Mammary epithelial cell (primary cell): ENCODE measurements at regions of chr7 and their contacts with region 1.

Region 1: GRCh38 chr7:142782922-142783900 is 12.4 kb downstream of the PRSS2 start:
- DNase-seq: peak; percentile 75
- H3K4me3 ChIP-seq: peak overlapping the region; percentile 38 to 49 (median 43)
- H3K27ac ChIP-seq: no peak overlapping the region
- H3K4me1 ChIP-seq: no peaks in the 10 kb centered on the region
- H3K27me3 ChIP-seq: no peaks in the 10 kb centered on the region
- CTCF ChIP-seq: peak; percentile 97

Region 2: DNA sequence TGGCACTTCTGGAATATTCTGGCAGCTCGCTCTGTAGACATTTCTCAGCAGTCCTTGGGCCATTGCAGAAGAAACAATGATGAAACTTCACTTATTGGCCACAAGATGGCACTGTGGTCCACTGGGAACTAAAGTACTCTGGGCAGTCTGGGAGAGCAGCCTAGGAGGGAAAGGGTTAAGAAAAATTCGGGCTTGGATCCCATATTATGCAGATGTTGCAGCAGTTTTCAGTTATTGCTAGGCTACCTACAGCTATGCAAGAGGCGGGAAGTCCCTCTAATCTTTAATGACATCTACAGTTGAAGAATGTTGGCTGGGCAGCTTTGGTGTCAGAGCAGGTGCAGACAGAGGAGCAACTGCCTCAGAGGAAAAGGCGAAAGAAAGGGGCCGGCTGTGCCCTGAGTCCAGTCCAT is 323.7 kb before region 1 on chr7:
- CTCF ChIA-PET with region 1: interaction called, 5 read pairs
- dilution Hi-C with region 1: no loop called
- in situ Hi-C with region 1: no loop called
- intact Hi-C with region 1: loop called (anchors 1 kb)
- DNase-seq: peak; percentile 67
- H3K4me3 ChIP-seq: no peak overlapping the region
- H3K27ac ChIP-seq: no peak overlapping the region
- H3K4me1 ChIP-seq: peaks cover 19% of the 10 kb centered on the region
- H3K27me3 ChIP-seq: no peaks in the 10 kb centered on the region
- CTCF ChIP-seq: peak; percentile 70 to 77

Region 3: GRCh38 chr7:142516038-142516501 is 267.1 kb before region 1 on chr7:
- CTCF ChIA-PET with region 1: interaction called, 3 read pairs
- dilution Hi-C with region 1: no loop called
- in situ Hi-C with region 1: no loop called
- intact Hi-C with region 1: loop called (anchors 1 kb)
- DNase-seq: peak; percentile 61
- H3K4me3 ChIP-seq: no peak overlapping the region
- H3K27ac ChIP-seq: no peak overlapping the region
- H3K4me1 ChIP-seq: peaks cover 5% of the 10 kb centered on the region
- H3K27me3 ChIP-seq: no peaks in the 10 kb centered on the region
- CTCF ChIP-seq: peak; percentile 82 to 84

Region 4: DNA sequence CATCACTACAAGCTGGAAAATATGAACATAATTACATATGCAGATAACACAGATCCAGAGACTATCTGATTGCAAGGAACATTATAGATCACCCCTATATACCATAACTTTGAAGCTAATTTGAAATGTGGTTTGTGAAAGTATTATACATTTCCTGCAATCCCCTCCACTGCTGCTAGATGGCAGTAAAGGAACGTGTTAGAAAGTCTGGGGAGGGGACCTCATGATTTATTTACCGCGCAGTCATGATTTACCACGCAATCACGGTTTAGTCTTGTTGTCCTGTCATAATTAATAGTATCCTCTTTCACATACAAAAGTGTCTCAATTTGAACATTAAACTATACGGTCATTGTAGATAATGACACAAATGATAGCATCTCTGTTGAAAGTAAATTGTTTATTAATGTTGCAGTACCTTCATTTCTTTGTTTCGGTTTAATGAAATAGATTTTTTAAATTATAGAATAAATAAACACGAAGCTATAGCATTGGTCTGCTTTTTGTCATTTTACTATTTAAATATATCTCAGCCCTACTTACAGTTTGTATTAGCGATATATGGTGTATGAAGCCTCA is 179.3 kb before region 1 on chr7:
- CTCF ChIA-PET with region 1: interaction called, 12 read pairs
- dilution Hi-C with region 1: no loop called
- in situ Hi-C with region 1: no loop called
- intact Hi-C with region 1: loop called (anchors 1 kb)
- DNase-seq: peak; percentile 32
- H3K4me3 ChIP-seq: no peak overlapping the region
- H3K27ac ChIP-seq: no peak overlapping the region
- H3K4me1 ChIP-seq: no peaks in the 10 kb centered on the region
- H3K27me3 ChIP-seq: no peaks in the 10 kb centered on the region
- CTCF ChIP-seq: peak; percentile 88 to 89

Region 5: GRCh38 chr7:142669074-142669654 is 114.0 kb before region 1 on chr7:
- CTCF ChIA-PET with region 1: interaction called, 39 read pairs
- dilution Hi-C with region 1: no loop called
- in situ Hi-C with region 1: no loop called
- intact Hi-C with region 1: loop called (anchors 1 kb)
- DNase-seq: peak; percentile 4
- H3K4me3 ChIP-seq: no peak overlapping the region
- H3K27ac ChIP-seq: no peak overlapping the region
- H3K4me1 ChIP-seq: no peaks in the 10 kb centered on the region
- H3K27me3 ChIP-seq: peaks cover under 1% of the 10 kb centered on the region
- CTCF ChIP-seq: peak; percentile 25 to 28